AG04449 (cell line): ENCODE measurements at regions of chr19 and their contacts with region 1.

Region 1: DNA sequence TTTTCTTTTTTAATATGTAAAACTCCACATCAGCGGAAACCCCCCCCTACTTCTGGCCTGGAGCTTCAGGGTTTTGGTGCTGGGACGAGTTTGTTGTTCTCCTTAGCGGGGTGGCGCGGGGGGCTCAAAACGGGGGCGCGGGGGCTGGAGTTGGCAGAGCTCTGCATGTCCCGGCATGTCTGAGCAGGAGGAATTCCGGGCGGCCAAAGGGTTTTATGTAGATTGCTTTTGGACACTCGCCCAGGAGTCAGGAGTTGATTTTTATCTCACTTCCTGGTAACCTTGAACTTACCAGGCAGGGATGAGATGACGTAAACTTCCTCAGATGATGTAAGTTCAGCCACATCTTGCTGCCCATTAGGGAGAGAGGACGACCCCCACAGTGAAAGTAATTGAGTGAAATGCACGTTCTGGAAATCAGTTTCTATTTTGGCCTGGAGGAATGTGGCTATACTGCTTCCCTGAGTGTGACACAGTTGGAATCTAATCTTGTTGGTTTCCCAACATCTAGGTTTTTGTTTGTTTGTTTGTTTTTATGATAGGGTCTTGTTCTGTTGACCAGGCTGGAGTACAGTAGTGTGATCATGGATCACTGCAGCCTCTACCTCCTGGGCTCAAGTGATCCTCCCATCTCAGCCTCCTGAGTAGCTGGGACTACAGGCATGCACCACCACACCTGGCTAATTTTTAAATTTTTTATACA is 21.0 kb upstream of the GDF15 start:
- DNase-seq: peak; percentile 99
- H3K4me3 ChIP-seq: no peak overlapping the region
- CTCF ChIP-seq: no peak

Region 2: DNA sequence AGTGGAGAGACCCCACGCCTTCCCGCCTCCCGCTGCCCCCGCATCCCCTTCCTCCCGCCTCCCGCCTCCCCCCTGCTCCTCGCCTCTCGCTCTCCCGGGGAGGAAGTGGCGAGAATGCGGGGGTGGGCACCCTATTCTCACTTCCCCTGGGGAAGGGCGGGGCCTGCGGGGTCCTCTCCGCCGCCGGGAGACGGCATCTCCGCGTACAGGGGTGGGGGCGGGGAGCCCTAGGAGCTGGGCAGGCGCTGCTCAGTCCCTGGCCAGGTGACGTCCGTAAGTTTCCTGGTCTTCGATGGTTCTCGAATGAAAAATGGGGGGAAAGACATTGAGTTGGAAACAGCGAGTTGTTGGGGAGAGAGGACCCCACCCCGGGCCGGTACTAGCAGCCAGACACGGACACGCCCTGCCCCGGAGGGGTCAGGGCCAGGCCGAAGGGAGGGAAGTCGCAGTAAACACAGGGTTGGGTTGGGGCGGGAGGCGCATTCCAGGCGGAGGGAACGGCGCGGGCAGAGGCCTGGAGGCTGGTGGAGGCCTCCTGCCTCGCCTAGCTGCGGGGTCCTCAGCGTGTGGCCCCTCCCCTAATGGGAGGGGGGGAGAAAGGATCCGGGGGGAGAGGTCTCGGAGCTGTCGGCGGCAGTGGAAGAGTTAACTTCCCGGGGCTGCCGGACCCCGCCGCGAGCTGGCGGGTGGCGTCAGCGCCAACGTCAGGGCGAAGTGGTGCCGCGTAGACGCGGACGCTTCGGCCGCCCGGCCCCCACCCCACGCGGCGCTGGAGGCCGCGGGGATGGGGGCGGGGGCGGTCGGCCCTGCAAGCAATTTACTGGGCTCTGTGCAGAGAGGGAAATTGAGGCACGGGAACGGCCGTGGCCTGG is 73.2 kb before region 1 on chr19:
- CTCF ChIA-PET with region 1: no interaction called
- POLR2A ChIA-PET with region 1: no interaction called
- DNase-seq: no peak
- H3K4me3 ChIP-seq: peak overlapping the region; percentile 61
- CTCF ChIP-seq: no peak

Region 3: DNA sequence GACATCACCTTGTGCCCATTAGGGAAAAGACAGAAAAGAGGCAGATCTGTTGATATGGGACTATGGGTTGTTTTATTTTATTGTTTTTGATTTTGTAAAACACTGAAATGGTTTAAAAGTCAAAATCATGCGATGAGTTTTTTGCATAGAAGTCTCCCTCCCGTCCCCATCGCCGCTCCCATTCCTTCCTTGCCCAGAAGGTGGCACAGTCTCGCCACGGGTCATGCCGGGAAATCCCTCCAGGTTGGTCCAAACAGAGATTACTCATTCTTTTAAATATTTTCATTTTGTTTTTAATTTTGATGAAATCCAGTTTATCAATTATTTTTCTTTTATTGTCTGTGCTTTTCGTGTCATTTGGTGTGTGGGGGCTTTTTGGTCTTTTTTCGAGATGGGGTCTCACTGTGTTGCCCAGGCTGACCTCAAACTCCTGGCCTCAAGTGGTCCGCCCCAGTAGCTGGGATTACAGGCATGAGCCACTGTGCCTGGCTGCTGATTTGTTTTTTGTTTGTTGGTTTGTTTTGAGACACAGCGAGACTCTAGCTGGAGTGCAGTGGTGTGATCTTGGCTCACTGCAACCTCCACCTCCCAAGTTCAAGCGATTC is 15.4 kb before region 1 on chr19:
- CTCF ChIA-PET with region 1: interaction called, 34 read pairs
- POLR2A ChIA-PET with region 1: interaction called, 4 read pairs
- DNase-seq: no peak
- H3K4me3 ChIP-seq: no peak overlapping the region
- CTCF ChIP-seq: peak; percentile 84

Region 4: GRCh38 chr19:18408053-18408476 is 43.1 kb after region 1 on chr19:
- CTCF ChIA-PET with region 1: interaction called, 17 read pairs
- POLR2A ChIA-PET with region 1: no interaction called
- DNase-seq: no peak
- H3K4me3 ChIP-seq: no peak overlapping the region
- CTCF ChIP-seq: peak; percentile 52